ENCODE measurements at regions of chr9 and their contacts with region 1.

Region 1: DNA sequence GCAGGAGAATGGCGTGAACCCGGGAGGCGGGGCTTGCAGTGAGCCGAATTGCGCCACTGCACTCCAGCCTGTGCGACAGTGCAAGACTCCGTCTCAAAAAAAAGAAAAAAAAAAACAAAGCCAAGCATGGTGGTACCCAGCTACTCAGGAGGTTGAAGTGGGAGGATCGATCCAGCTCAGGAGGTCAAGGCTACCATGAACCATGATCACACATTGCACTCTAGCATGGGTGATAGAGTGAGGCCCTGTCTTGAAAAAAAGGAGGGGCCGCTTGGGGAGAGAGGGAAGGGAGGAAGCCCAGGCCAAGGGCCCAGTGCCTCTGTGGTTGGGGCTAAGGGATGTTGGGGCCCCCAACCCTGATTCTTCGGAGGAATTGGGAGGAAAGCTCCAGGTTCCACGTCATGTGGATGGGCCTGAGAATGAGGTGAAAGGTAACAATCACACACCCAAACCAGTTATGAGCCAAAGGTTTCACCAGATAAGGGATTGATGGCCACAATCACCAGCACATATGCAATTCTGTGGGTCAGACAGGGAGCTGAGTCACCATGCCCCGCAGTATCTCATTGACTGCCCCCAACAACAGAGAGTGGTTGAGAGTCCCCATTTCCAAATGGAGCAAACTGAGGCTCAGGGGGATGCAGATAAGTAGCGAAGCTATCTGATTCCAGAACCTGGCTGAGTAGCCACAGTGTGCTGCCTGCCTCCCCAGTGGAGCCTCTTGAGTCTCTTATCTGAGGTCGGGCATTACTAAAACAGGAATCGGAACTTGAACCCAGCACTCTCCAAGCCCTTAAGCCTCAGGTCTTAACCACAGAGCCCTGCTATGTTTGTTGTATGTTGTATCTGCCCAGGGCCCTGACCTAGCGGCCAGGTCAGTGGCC is 20.5 kb downstream of the SWI5 start:
- DNase-seq: no peak
- H3K4me3 ChIP-seq: no peak overlapping the region
- H3K27ac ChIP-seq: no peak overlapping the region
- H3K4me1 ChIP-seq: no peaks in the 10 kb centered on the region
- H3K27me3 ChIP-seq: no peaks in the 10 kb centered on the region
- CTCF ChIP-seq: no peak

Region 2: DNA sequence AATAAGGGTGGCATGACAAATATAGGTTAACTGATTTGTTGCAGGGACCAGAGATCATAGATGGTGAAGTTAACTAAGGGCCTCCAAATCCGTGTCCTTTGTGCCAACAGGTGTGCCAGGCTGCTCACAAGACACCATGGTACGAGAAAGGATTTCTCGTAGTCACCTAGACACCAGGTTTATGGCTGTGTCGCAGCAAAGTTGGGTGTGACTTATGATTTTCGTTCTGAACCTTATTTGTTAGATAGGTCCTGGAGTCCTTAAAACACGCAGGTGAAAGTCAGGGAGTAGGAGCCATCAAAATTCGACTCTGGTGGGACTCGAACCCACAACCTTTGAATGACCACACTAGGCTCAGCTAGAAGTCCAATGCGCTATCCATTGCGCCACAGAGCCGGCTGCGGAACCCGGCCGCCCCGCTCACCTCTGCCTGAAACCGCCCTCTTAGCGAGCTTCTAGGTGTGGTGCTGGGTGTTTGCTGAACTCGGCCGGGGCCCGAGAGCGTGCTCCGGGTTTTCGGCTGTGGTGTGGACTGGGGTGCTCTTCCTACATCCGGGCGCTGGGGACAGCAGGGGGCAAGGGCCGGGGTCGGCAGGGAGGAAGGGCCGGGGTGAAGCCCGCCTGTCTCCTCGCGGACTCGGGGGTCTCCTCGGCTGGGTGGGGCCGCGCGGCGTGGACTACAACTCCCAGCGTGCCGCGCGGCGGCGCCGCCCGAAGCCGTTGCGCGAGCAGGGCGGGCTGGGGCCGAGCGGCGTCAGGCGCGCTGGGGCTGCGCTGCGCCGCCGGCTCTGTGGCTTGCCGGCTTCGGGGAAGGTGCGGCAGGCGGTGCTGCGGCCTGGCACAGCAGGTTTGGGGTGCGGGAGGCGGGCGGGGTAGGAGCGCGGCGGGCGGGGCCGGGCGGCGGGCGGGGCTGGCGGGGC is 43.5 kb after region 1 on chr9 and contains the start of gene SLC27A4:
- CTCF ChIA-PET with region 1: no interaction called
- POLR2A ChIA-PET with region 1: no interaction called
- intact Hi-C with region 1: loop called (anchors 2 kb)
- DNase-seq: peak; percentile 90
- H3K4me3 ChIP-seq: peak within 1 kb of the TSS; percentile 92
- H3K27ac ChIP-seq: peak within 1 kb of the TSS; percentile 67
- H3K4me1 ChIP-seq: peaks cover 5% of the 10 kb centered on the region
- H3K27me3 ChIP-seq: no peaks in the 10 kb centered on the region
- CTCF ChIP-seq: no peak
- total RNA-seq, gene SLC27A4: 35.4 and 39.1 TPM in 2 replicates

Region 3: DNA sequence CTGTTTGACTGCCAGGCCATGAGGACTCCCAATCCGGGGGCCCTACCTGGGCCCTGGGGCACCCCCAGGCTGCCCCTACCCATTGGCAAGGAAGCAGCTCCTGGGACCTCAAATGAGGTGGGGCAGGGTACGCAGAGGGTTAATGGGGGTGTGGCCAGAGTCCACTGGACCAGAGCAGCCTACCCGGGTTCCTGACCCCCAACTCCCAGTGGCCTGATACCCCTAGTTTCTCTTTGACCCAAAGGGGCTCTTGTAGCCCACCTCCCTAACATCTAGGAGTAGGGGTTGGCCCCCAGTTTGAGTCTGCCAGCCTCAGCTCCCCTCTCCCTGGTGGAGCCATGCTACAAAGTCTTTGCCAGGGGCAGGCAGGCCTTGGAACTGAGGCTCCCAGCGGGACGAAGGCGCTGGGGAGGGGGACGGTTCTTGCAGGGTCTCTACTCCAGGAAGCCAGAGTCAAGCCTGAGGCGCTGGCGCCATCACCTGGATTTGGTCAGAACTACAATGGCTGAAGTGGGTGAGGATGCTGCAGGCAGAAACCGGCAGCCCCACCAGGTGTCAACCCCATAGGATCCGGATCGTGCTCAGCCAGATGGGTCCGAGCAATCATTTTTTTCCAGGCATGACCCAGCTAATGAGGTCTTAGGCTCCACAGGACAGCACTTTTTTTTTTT is 115.7 kb after region 1 on chr9:
- CTCF ChIA-PET with region 1: interaction called, 5 read pairs
- POLR2A ChIA-PET with region 1: no interaction called
- intact Hi-C with region 1: loop called (anchors 5 kb)
- DNase-seq: peak; percentile 88
- H3K4me3 ChIP-seq: no peak overlapping the region
- H3K27ac ChIP-seq: no peak overlapping the region
- H3K4me1 ChIP-seq: peaks cover 15% of the 10 kb centered on the region
- H3K27me3 ChIP-seq: no peaks in the 10 kb centered on the region
- CTCF ChIP-seq: peak; percentile 87

Region 4: GRCh38 chr9:129823935-129824601 is 1527.5 kb after region 1 on chr9 and contains the start of gene TOR1A:
- CTCF ChIA-PET with region 1: no interaction called
- POLR2A ChIA-PET with region 1: no interaction called
- intact Hi-C with region 1: no loop called
- DNase-seq: peak; percentile 96
- H3K4me3 ChIP-seq: peak within 1 kb of the TSS; percentile 96
- H3K27ac ChIP-seq: peak within 1 kb of the TSS; percentile 88
- H3K4me1 ChIP-seq: no peaks in the 10 kb centered on the region
- H3K27me3 ChIP-seq: no peaks in the 10 kb centered on the region
- CTCF ChIP-seq: no peak
- total RNA-seq, gene TOR1A: 42.8 and 46.3 TPM in 2 replicates

Measured in A673 (cell line).